Activated naive CD4-positive, alpha-beta T cell treated with anti-CD3 and anti-CD28 coated beads for 36 hours (primary cell): ENCODE measurements at regions of chr12 and their contacts with region 1.

Region 1: GRCh38 chr12:89181271-89181920 is 170.9 kb downstream of the DUSP6 start:
- DNase-seq: no peak
- H3K4me3 Mint-ChIP-seq: no peak overlapping the region
- H3K27ac Mint-ChIP-seq: peak overlapping the region; percentile 50
- H3K4me1 Mint-ChIP-seq: peaks cover 22% of the 10 kb centered on the region
- H3K27me3 Mint-ChIP-seq: peaks cover 3% of the 10 kb centered on the region

Region 2: GRCh38 chr12:88985475-88986030 is 195.8 kb before region 1 on chr12:
- CTCF ChIA-PET with region 1: no interaction called
- intact Hi-C with region 1: no loop called
- DNase-seq: no peak
- H3K4me3 Mint-ChIP-seq: no peak overlapping the region
- H3K27ac Mint-ChIP-seq: no peak overlapping the region
- H3K4me1 Mint-ChIP-seq: no peaks in the 10 kb centered on the region
- H3K27me3 Mint-ChIP-seq: peaks cover 6% of the 10 kb centered on the region

Region 3: GRCh38 chr12:89051065-89051677 is 130.2 kb before region 1 on chr12:
- CTCF ChIA-PET with region 1: no interaction called
- intact Hi-C with region 1: no loop called
- DNase-seq: peak; percentile 37
- H3K4me3 Mint-ChIP-seq: no peak overlapping the region
- H3K27ac Mint-ChIP-seq: no peak overlapping the region
- H3K4me1 Mint-ChIP-seq: peaks cover 10% of the 10 kb centered on the region
- H3K27me3 Mint-ChIP-seq: no peaks in the 10 kb centered on the region

Region 4: GRCh38 chr12:89194683-89195082 is 13.3 kb after region 1 on chr12:
- CTCF ChIA-PET with region 1: interaction called, 3 read pairs
- intact Hi-C with region 1: loop called (anchors 1 kb)
- DNase-seq: no peak
- H3K4me3 Mint-ChIP-seq: no peak overlapping the region
- H3K27ac Mint-ChIP-seq: no peak overlapping the region
- H3K4me1 Mint-ChIP-seq: no peaks in the 10 kb centered on the region
- H3K27me3 Mint-ChIP-seq: no peaks in the 10 kb centered on the region

Region 5: GRCh38 chr12:89345830-89346740 is 164.7 kb after region 1 on chr12:
- CTCF ChIA-PET with region 1: no interaction called
- intact Hi-C with region 1: loop called (anchors 1 kb)
- DNase-seq: peak; percentile 61
- H3K4me3 Mint-ChIP-seq: no peak overlapping the region
- H3K27ac Mint-ChIP-seq: peak overlapping the region; percentile 51
- H3K4me1 Mint-ChIP-seq: peaks cover 43% of the 10 kb centered on the region
- H3K27me3 Mint-ChIP-seq: peaks cover 4% of the 10 kb centered on the region